ENCODE measurements at regions of chr5 and their contacts with region 1.

Region 1: DNA sequence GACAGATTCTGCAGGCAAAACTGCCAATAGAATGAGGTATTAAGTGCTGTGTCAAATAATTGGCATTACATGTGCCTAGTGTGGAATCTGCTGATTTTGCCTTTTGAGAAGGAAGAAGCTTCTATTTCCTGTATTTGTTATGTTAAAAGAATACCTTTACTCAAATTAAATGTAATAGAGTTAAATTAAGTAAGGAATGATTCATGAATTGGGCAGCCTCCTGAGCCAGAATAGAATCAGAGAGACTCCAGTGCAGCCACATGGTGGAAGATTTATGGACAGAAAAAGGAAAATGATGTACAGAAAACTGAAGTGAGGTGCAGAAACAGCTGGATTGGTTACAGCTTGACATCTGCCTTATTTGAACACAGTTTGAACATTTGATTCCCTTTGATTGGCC is 464.4 kb upstream of the SEMA6A start:
- DNase-seq: no peak
- ATAC-seq: no peak
- H3K4me3 ChIP-seq: no peak overlapping the region
- H3K4me3 Mint-ChIP-seq: no peak overlapping the region
- H3K27ac ChIP-seq: no peak overlapping the region
- H3K27ac Mint-ChIP-seq: no peak overlapping the region
- H3K4me1 ChIP-seq: no peaks in the 10 kb centered on the region
- H3K4me1 Mint-ChIP-seq: no peaks in the 10 kb centered on the region
- H3K27me3 ChIP-seq: no peaks in the 10 kb centered on the region
- H3K27me3 Mint-ChIP-seq: no peaks in the 10 kb centered on the region
- CTCF ChIP-seq: no peak

Region 2: GRCh38 chr5:116622375-116623050 is 416.5 kb before region 1 on chr5:
- CTCF ChIA-PET with region 1: no interaction called
- POLR2A ChIA-PET with region 1: interaction called, 12 read pairs
- intact Hi-C with region 1: no loop called
- DNase-seq: no peak
- ATAC-seq: no peak
- H3K4me3 ChIP-seq: no peak overlapping the region
- H3K4me3 Mint-ChIP-seq: no peak overlapping the region
- H3K27ac ChIP-seq: no peak overlapping the region
- H3K27ac Mint-ChIP-seq: no peak overlapping the region
- H3K4me1 ChIP-seq: no peaks in the 10 kb centered on the region
- H3K4me1 Mint-ChIP-seq: no peaks in the 10 kb centered on the region
- H3K27me3 ChIP-seq: no peaks in the 10 kb centered on the region
- H3K27me3 Mint-ChIP-seq: no peaks in the 10 kb centered on the region
- CTCF ChIP-seq: no peak

Region 3: DNA sequence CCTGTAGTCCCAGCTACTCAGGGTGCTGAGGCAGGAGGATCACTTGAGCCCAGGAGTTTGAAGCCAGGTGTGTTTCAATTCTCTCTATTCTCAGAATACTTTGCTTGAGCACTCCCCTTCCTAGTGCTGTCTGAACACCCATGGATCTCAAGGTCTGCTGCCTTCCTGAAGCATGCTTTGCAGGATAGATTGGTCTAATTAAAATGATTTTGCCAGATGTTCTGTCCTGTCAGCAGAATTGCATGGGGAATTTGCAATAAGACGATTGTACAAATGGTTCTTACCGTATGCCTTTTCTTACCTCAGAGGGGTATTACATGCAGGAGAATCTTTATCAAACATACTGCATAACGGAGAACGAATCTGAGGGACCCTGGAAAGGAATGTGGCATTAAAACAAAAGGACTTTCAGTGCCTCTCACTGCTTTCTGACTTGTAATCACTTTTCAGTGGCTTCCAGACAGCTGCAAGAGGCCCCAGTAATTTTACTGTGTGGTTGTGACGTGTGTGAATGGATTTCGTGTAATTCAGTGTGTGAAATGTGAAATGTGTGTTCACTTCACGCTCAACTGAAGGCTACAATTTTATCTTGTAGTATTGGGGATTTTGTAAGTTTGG is 122.8 kb after region 1 on chr5:
- CTCF ChIA-PET with region 1: no interaction called
- POLR2A ChIA-PET with region 1: no interaction called
- intact Hi-C with region 1: no loop called
- DNase-seq: no peak
- ATAC-seq: no peak
- H3K4me3 ChIP-seq: no peak overlapping the region
- H3K4me3 Mint-ChIP-seq: no peak overlapping the region
- H3K27ac ChIP-seq: no peak overlapping the region
- H3K27ac Mint-ChIP-seq: no peak overlapping the region
- H3K4me1 ChIP-seq: no peaks in the 10 kb centered on the region
- H3K4me1 Mint-ChIP-seq: no peaks in the 10 kb centered on the region
- H3K27me3 ChIP-seq: no peaks in the 10 kb centered on the region
- H3K27me3 Mint-ChIP-seq: no peaks in the 10 kb centered on the region
- CTCF ChIP-seq: no peak

Measured in B cell (primary cell).